SK-N-SH (cell line): ENCODE measurements at regions of chr1 and their contacts with region 1.

Region 1: GRCh38 chr1:159161001-159161718 is 10.3 kb upstream of the CADM3 start:
- DNase-seq: peak; percentile 64
- H3K4me3 ChIP-seq: peak overlapping the region in 1 of 2 experiments; percentile 43; a peak in 1 of 4 replicates
- H3K27ac ChIP-seq: peak overlapping the region in 1 of 2 experiments; percentile 38; a peak in 1 of 4 replicates
- H3K4me1 ChIP-seq: peaks cover 0 to 12% of the 10 kb centered on the region in 2 experiments; a peak in 2 of 4 replicates
- H3K27me3 ChIP-seq: no peaks in the 10 kb centered on the region; the same call in 1 of the 2 replicates
- CTCF ChIP-seq: peak; percentile 100
- EP300 ChIP-seq: no peak
- RAD21 ChIP-seq: peak; percentile 100

Region 2: DNA sequence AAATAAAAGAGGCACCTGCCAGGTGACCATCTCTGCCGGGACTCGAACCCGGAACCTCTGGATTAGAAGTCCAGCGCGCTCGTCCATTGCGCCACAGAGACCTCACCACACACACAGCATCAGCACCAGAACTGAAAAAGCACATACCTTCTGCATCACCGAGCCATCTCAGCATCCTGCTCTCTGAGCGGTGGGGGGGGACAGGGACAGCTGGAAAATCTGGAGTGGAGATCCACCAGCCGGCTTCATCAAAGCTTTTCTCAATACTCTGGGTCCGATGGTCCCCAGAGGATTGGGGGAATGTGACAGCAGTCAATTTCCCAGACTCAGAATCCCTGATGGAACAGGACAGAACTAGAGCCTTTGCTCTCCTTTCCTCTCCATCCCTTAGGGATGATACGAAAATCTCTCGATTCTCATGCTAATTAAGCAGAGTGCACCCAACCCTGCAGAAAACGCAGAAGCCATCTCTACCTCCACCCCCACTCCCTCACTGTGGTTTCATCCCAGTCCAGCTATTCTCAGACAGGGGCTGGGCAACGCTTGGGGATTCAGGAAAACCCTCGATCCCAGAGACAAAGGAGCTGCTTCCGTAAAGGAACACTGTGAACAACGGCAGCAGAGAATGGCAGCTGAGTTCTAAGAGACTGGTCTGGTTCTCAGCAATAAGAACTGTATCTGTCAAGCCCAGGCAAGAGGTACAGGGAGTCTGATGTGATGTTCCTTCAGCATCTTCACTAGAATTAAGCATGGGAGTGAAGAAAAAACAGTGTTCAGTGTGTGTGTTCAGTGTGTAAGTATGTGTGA is 19.4 kb before region 1 on chr1:
- CTCF ChIA-PET with region 1: interaction called, 30 read pairs
- POLR2A ChIA-PET with region 1: no interaction called
- DNase-seq: peak; percentile 72
- H3K4me3 ChIP-seq: peak overlapping the region; percentile 44 to 69
- H3K27ac ChIP-seq: 0 out of 4 replicates have a peak overlapping the region, but pooled peaks of 1 of the 2 experiments have one; percentile 6
- H3K4me1 ChIP-seq: no peaks in the 10 kb centered on the region; a peak in 1 of 4 replicates
- H3K27me3 ChIP-seq: peaks cover 28% of the 10 kb centered on the region
- CTCF ChIP-seq: no peak
- EP300 ChIP-seq: no peak
- RAD21 ChIP-seq: no peak

Region 3: GRCh38 chr1:159146980-159147379 is 14.2 kb before region 1 on chr1:
- CTCF ChIA-PET with region 1: interaction called, 30 read pairs
- POLR2A ChIA-PET with region 1: no interaction called
- DNase-seq: no peak
- H3K4me3 ChIP-seq: no peak overlapping the region
- H3K27ac ChIP-seq: no peak overlapping the region
- H3K4me1 ChIP-seq: no peaks in the 10 kb centered on the region
- H3K27me3 ChIP-seq: peaks cover 5% of the 10 kb centered on the region; the same call in 1 of the 2 replicates
- CTCF ChIP-seq: no peak
- EP300 ChIP-seq: no peak
- RAD21 ChIP-seq: no peak

Region 4: DNA sequence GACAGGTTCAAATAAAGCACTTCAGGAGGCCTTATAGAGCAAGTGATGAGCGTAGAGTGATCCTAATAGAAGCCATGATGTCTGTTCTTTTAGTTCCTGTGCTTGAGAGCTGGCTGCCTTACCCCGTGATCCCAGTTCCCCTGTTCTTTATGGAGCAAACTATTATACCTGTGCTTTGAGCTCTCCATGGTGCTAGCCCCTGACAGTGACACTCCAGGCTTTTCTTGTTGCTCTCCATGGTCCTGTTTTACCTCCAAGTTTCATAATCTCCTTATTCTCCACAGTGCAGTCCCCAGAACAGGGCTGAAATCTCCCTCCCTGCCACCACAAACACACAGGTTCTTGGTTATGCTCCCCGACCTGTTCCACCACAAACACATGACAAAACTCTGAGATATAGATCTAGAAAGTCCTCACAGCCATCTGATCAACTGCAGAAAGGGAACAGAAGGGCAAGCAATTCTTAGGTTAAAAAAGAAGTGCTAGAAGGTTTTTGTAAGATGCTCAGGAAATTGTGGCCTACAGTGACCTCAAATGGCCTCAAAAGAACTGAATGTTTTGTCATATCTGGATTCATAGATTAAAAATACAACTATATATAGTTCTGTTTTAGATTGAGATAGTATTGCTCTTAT is 16.2 kb after region 1 on chr1:
- CTCF ChIA-PET with region 1: interaction called, 21 read pairs
- POLR2A ChIA-PET with region 1: interaction called, 3 read pairs
- DNase-seq: no peak
- H3K4me3 ChIP-seq: no peak overlapping the region
- H3K27ac ChIP-seq: no peak overlapping the region
- H3K4me1 ChIP-seq: peaks cover 0 to 7% of the 10 kb centered on the region in 2 experiments; a peak in 1 of 4 replicates
- H3K27me3 ChIP-seq: peaks cover 6% of the 10 kb centered on the region; the same call in 1 of the 2 replicates
- CTCF ChIP-seq: no peak
- EP300 ChIP-seq: no peak
- RAD21 ChIP-seq: no peak

Region 5: DNA sequence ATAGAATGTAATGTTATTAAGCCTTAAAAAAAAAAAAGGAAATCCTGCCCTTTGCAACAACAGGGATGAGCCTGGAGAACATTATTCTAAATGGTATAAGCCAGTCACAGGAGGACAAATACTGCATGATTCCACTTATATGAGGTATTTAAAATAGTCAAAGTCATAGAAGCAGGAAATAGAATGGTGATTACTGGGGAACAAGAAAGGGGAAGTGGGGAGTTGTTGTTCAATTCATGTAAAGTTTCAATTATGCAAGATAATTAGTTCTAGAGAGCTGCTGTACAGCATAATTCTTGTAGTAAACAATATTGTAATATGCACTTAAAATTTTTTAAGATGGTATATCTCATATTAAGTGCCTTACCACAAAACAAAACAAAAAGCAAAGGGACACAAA is 154.2 kb after region 1 on chr1:
- CTCF ChIA-PET with region 1: no interaction called
- POLR2A ChIA-PET with region 1: no interaction called
- DNase-seq: no peak
- H3K4me3 ChIP-seq: no peak overlapping the region
- H3K27ac ChIP-seq: no peak overlapping the region
- H3K4me1 ChIP-seq: no peaks in the 10 kb centered on the region
- H3K27me3 ChIP-seq: no peaks in the 10 kb centered on the region
- CTCF ChIP-seq: no peak
- EP300 ChIP-seq: no peak
- RAD21 ChIP-seq: no peak